ENCODE measurements at regions of chr2 and their contacts with region 1.

Region 1: GRCh38 chr2:74715078-74715791 is 61.2 kb downstream of the SEMA4F start:
- DNase-seq: peak; percentile 88
- H3K4me3 Mint-ChIP-seq: peak overlapping the region; percentile 81
- H3K27ac Mint-ChIP-seq: no peak overlapping the region
- H3K4me1 Mint-ChIP-seq: peaks cover 7% of the 10 kb centered on the region
- H3K27me3 Mint-ChIP-seq: peaks cover 11% of the 10 kb centered on the region

Region 2: GRCh38 chr2:74690571-74690970 is 24.7 kb before region 1 on chr2:
- CTCF ChIA-PET with region 1: interaction called, 5 read pairs
- intact Hi-C with region 1: loop called (anchors 1 kb)
- DNase-seq: peak; percentile 46
- H3K4me3 Mint-ChIP-seq: no peak overlapping the region
- H3K27ac Mint-ChIP-seq: no peak overlapping the region
- H3K4me1 Mint-ChIP-seq: no peaks in the 10 kb centered on the region
- H3K27me3 Mint-ChIP-seq: no peaks in the 10 kb centered on the region

Region 3: GRCh38 chr2:74699251-74699650 is 16.0 kb before region 1 on chr2:
- CTCF ChIA-PET with region 1: interaction called, 11 read pairs
- intact Hi-C with region 1: no loop called
- DNase-seq: no peak
- H3K4me3 Mint-ChIP-seq: no peak overlapping the region
- H3K27ac Mint-ChIP-seq: no peak overlapping the region
- H3K4me1 Mint-ChIP-seq: no peaks in the 10 kb centered on the region
- H3K27me3 Mint-ChIP-seq: no peaks in the 10 kb centered on the region

Region 4: DNA sequence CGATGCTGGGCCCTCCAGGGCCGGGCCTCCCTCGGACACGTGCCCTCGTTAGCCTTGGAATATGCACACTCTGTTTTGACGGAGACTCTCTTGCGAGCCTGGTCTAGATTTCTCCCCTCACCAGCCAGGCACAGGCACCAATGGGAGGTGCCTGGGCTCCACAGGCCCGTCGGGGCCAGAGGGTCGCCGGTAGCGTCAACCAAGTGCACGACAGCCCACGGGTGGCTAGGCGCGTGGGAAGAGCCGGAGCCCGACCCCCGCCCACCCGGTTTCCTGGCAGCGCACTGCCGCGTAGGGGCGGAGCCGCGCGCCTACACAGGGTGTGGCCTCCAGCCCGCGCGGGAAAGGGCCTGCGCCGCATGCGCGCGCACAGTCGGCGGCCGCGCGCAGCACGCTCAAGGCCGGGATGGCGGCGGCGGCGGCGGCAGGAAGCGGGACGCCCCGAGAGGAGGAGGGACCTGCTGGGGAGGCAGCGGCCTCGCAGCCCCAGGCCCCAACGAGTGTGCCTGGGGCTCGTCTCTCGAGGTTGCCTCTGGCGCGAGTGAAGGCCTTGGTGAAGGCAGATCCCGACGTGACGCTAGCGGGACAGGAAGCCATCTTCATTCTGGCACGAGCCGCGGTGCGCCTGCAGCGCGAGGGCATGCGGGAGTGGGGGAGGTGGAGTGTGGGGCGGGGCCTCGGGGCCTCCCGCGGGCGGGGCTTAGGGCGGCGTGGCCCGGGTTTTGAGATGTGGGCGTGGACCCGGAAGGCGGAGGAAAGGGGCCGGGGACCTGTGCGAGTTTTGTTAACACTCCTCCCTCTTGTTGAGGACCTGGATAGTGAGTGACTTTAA is 243.3 kb after region 1 on chr2 and contains the start of gene POLE4:
- CTCF ChIA-PET with region 1: no interaction called
- intact Hi-C with region 1: no loop called
- DNase-seq: peak; percentile 95
- H3K4me3 Mint-ChIP-seq: peak within 1 kb of the TSS; percentile 80
- H3K27ac Mint-ChIP-seq: peak within 1 kb of the TSS; percentile 87
- H3K4me1 Mint-ChIP-seq: peaks cover 60% of the 10 kb centered on the region
- H3K27me3 Mint-ChIP-seq: no peaks in the 10 kb centered on the region
- total RNA-seq, gene POLE4: 69.7 to 76.5 TPM